ENCODE measurements at regions of chr3 and their contacts with region 1.

Region 1: GRCh38 chr3:64533617-64534317 is 154.0 kb downstream of the ADAMTS9 start:
- DNase-seq: peak; percentile 77
- ATAC-seq: peak; percentile 85
- H3K4me3 Mint-ChIP-seq: no peak overlapping the region
- H3K27ac Mint-ChIP-seq: no peak overlapping the region
- H3K4me1 Mint-ChIP-seq: peaks cover 6% of the 10 kb centered on the region
- H3K27me3 Mint-ChIP-seq: peaks cover 14% of the 10 kb centered on the region

Region 2: DNA sequence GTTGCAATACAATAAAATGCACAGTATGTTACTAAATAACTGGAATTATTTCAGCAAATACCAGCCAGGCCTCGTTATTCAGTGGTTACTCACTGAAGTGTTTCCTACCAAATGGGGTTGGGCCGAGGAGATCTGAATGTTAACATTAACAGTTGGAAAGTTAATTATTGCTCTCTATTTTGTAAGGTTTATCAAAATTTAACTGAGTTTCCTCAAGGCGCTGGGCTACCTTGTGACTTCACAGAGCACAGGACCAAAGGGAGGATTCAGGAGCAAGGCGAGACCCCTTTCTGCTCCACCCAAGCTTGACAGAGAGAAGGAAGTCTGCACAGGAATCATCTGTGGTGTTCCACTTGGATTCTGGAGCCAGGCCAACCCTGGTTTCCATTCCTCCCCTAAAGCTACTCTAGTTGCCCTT is 132.4 kb after region 1 on chr3:
- CTCF ChIA-PET with region 1: no interaction called
- POLR2A ChIA-PET with region 1: no interaction called
- intact Hi-C with region 1: no loop called
- DNase-seq: no peak
- ATAC-seq: no peak
- H3K4me3 Mint-ChIP-seq: no peak overlapping the region
- H3K27ac Mint-ChIP-seq: no peak overlapping the region
- H3K4me1 Mint-ChIP-seq: no peaks in the 10 kb centered on the region
- H3K27me3 Mint-ChIP-seq: no peaks in the 10 kb centered on the region

Region 3: GRCh38 chr3:65080432-65080831 is 546.7 kb after region 1 on chr3:
- CTCF ChIA-PET with region 1: no interaction called
- POLR2A ChIA-PET with region 1: no interaction called
- intact Hi-C with region 1: loop called in 1 of 2 experiments (anchors 10 kb)
- DNase-seq: no peak
- ATAC-seq: no peak
- H3K4me3 Mint-ChIP-seq: no peak overlapping the region
- H3K27ac Mint-ChIP-seq: no peak overlapping the region
- H3K4me1 Mint-ChIP-seq: no peaks in the 10 kb centered on the region
- H3K27me3 Mint-ChIP-seq: no peaks in the 10 kb centered on the region

Region 4: GRCh38 chr3:65672871-65673815 is 1139.4 kb after region 1 on chr3:
- CTCF ChIA-PET with region 1: no interaction called
- POLR2A ChIA-PET with region 1: no interaction called
- intact Hi-C with region 1: loop called in 1 of 2 experiments (anchors 1 kb)
- DNase-seq: peak; percentile 61
- ATAC-seq: no peak
- H3K4me3 Mint-ChIP-seq: no peak overlapping the region
- H3K27ac Mint-ChIP-seq: no peak overlapping the region
- H3K4me1 Mint-ChIP-seq: no peaks in the 10 kb centered on the region
- H3K27me3 Mint-ChIP-seq: peaks cover 2% of the 10 kb centered on the region

Region 5: DNA sequence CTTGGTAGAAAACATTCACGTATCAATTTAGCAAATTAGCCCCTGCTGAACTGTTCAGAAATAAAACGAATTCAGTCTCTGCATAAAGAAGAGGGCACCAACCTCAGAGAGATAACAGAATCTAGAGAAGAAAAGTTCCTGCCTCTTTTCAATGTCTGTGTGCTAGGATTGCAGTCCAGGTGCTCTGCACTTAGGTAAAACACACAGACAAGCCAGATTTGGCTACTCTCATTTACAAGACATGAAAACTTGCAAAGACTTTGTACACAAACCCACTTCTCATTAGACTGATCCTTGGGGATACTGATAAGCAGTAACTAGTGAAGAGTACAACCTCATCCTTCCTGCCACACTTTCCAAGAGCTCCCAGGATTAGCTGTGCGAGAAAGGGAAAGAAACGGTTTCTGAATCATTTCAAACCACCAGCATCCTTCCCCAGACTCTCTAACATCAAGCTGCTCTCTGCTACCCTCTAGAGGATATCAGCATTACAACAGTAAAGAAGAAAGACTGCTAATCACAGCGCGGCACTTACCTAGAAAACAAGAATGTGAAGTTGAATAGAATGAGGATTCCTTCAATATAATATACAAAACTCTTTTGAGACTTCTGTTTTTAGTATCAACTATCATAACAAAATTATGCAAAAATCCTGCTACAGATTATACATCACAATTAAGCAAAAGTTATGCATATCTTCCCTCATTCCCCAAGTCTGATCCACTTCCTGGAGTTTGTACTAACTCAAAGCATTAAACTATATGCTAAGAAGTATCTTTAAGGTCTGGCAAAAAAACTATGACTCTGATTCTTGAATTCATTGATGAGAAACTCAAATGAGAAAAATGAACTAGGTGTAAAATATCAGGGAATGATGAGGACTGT is 1198.5 kb after region 1 on chr3:
- CTCF ChIA-PET with region 1: interaction called, 4 read pairs
- POLR2A ChIA-PET with region 1: no interaction called
- intact Hi-C with region 1: loop called (anchors 1 to 5 kb)
- DNase-seq: peak; percentile 8
- ATAC-seq: peak; percentile 63
- H3K4me3 Mint-ChIP-seq: no peak overlapping the region
- H3K27ac Mint-ChIP-seq: no peak overlapping the region
- H3K4me1 Mint-ChIP-seq: peaks cover 1% of the 10 kb centered on the region
- H3K27me3 Mint-ChIP-seq: peaks cover 6% of the 10 kb centered on the region

Region 6: GRCh38 chr3:65751123-65751700 is 1217.4 kb after region 1 on chr3:
- CTCF ChIA-PET with region 1: interaction called, 6 read pairs
- POLR2A ChIA-PET with region 1: no interaction called
- intact Hi-C with region 1: loop called in 1 of 2 experiments (anchors 5 kb)
- DNase-seq: peak; percentile 39
- ATAC-seq: no peak
- H3K4me3 Mint-ChIP-seq: no peak overlapping the region
- H3K27ac Mint-ChIP-seq: no peak overlapping the region
- H3K4me1 Mint-ChIP-seq: no peaks in the 10 kb centered on the region
- H3K27me3 Mint-ChIP-seq: no peaks in the 10 kb centered on the region

Region 7: GRCh38 chr3:66138336-66139313 is 1604.9 kb after region 1 on chr3:
- CTCF ChIA-PET with region 1: no interaction called
- POLR2A ChIA-PET with region 1: no interaction called
- intact Hi-C with region 1: loop called in 1 of 2 experiments (anchors 5 kb)
- DNase-seq: peak; percentile 47
- ATAC-seq: peak; percentile 63
- H3K4me3 Mint-ChIP-seq: no peak overlapping the region
- H3K27ac Mint-ChIP-seq: no peak overlapping the region
- H3K4me1 Mint-ChIP-seq: no peaks in the 10 kb centered on the region
- H3K27me3 Mint-ChIP-seq: peaks cover 14% of the 10 kb centered on the region